Endothelial cell of umbilical vein (primary cell): ENCODE measurements at regions of chr4 and their contacts with region 1.

Region 1: GRCh38 chr4:138870737-138871554 is 144.6 kb upstream of the NOCT start:
- DNase-seq: peak; percentile 77
- H3K4me3 ChIP-seq: no peak overlapping the region
- H3K27ac ChIP-seq: no peak overlapping the region
- H3K4me1 ChIP-seq: peaks cover 5% of the 10 kb centered on the region
- H3K27me3 ChIP-seq: peaks cover 3 to 6% of the 10 kb centered on the region in 2 experiments
- CTCF ChIP-seq: peak; percentile 66 to 71
- POLR2A ChIP-seq: no peak

Region 2: GRCh38 chr4:137819964-137820383 is 1051.0 kb before region 1 on chr4:
- CTCF ChIA-PET with region 1: interaction called, 45 read pairs
- POLR2A ChIA-PET with region 1: no interaction called
- dilution Hi-C with region 1: no loop called
- intact Hi-C with region 1: loop called (anchors 1 kb)
- DNase-seq: peak; percentile 61
- H3K4me3 ChIP-seq: no peak overlapping the region
- H3K27ac ChIP-seq: no peak overlapping the region
- H3K4me1 ChIP-seq: peaks cover 3% of the 10 kb centered on the region
- H3K27me3 ChIP-seq: no peaks in the 10 kb centered on the region
- CTCF ChIP-seq: peak; percentile 46 to 57
- POLR2A ChIP-seq: no peak

Region 3: DNA sequence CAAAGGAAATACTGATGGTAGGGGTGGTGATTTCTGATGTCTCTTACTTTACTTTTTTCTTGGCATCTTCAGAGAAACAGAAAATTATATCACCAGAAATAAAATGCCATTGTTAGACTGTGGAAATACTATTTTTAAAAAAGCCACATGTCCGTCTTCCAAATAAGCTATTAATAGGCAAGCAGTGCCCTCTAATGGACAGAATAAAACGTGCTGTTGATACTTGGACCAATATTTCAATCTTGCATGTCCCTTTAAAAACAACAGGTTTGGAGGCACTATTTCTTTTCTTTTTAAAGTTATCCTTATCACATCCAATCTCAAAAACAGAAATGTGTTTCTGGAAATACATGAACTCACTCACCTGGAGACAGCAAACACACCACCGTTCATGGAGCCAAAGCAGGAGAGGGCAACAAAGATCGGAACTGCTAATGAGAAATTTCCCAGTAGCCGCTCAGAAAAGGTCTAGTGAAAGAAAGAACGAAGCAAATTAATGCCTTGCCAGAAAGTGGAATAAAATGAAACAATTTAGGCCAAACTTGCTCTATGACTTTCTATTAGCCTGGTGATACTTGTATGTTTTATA is 688.0 kb before region 1 on chr4:
- CTCF ChIA-PET with region 1: interaction called, 8 read pairs
- POLR2A ChIA-PET with region 1: no interaction called
- dilution Hi-C with region 1: no loop called
- intact Hi-C with region 1: loop called (anchors 2 kb)
- DNase-seq: peak; percentile 85
- H3K4me3 ChIP-seq: no peak overlapping the region
- H3K27ac ChIP-seq: no peak overlapping the region
- H3K4me1 ChIP-seq: peaks cover 14% of the 10 kb centered on the region
- H3K27me3 ChIP-seq: no peaks in the 10 kb centered on the region
- CTCF ChIP-seq: peak; percentile 43 to 48
- POLR2A ChIP-seq: no peak

Region 4: DNA sequence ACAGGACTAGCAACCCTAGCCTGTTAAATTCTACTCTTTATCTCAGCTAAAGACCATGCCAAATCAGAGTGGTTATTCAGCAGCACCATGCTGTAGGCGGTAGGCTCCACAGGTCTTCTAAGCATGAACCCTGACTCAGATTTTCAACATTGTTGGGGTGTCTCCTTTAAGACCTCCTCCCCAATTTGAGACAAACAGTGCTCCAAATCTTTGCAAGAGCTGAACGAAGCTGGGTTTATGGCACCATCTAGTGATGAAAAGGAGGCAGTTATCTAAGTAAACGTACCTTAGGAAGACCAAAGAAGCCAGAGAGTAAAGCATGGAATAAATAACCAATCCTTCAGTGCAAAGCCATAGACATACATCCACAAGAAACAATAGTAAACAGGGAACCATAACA is 294.3 kb before region 1 on chr4:
- CTCF ChIA-PET with region 1: interaction called, 84 read pairs
- POLR2A ChIA-PET with region 1: no interaction called
- dilution Hi-C with region 1: no loop called
- intact Hi-C with region 1: loop called (anchors 1 kb)
- DNase-seq: peak; percentile 57
- H3K4me3 ChIP-seq: no peak overlapping the region
- H3K27ac ChIP-seq: no peak overlapping the region
- H3K4me1 ChIP-seq: no peaks in the 10 kb centered on the region
- H3K27me3 ChIP-seq: peaks cover under 1 to 3% of the 10 kb centered on the region in 2 experiments
- CTCF ChIP-seq: peak; percentile 31 to 53
- POLR2A ChIP-seq: no peak

Region 5: GRCh38 chr4:138734746-138735145 is 136.2 kb before region 1 on chr4:
- CTCF ChIA-PET with region 1: interaction called, 3 read pairs
- POLR2A ChIA-PET with region 1: no interaction called
- dilution Hi-C with region 1: no loop called
- intact Hi-C with region 1: loop called (anchors 5 kb)
- DNase-seq: peak; percentile 90
- H3K4me3 ChIP-seq: no peak overlapping the region
- H3K27ac ChIP-seq: peak overlapping the region; percentile 34
- H3K4me1 ChIP-seq: peaks cover 30% of the 10 kb centered on the region
- H3K27me3 ChIP-seq: no peaks in the 10 kb centered on the region
- CTCF ChIP-seq: no peak
- POLR2A ChIP-seq: no peak

Region 6: DNA sequence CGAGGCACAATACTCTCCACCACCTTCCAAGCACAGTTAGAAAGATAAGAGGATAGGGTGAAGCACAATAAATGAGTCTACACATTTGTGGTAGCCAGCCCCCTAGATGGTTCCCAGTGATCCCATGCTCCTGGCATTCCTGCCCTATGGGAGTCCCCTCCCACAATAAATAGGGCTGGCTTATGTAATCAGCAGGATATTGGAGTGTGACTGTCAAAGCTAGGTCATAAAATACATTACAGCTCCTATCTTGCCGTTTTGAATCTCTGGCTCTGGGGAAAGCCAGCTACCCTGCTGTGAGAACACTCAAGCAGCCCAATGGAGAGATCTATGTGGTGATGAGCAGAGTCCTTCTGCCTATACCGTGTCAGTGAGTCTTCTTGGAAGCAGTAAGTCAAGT is 54.1 kb before region 1 on chr4:
- CTCF ChIA-PET with region 1: no interaction called
- POLR2A ChIA-PET with region 1: no interaction called
- dilution Hi-C with region 1: no loop called
- intact Hi-C with region 1: no loop called
- DNase-seq: no peak
- H3K4me3 ChIP-seq: no peak overlapping the region
- H3K27ac ChIP-seq: no peak overlapping the region
- H3K4me1 ChIP-seq: no peaks in the 10 kb centered on the region
- H3K27me3 ChIP-seq: no peaks in the 10 kb centered on the region
- CTCF ChIP-seq: no peak
- POLR2A ChIP-seq: no peak

Region 7: DNA sequence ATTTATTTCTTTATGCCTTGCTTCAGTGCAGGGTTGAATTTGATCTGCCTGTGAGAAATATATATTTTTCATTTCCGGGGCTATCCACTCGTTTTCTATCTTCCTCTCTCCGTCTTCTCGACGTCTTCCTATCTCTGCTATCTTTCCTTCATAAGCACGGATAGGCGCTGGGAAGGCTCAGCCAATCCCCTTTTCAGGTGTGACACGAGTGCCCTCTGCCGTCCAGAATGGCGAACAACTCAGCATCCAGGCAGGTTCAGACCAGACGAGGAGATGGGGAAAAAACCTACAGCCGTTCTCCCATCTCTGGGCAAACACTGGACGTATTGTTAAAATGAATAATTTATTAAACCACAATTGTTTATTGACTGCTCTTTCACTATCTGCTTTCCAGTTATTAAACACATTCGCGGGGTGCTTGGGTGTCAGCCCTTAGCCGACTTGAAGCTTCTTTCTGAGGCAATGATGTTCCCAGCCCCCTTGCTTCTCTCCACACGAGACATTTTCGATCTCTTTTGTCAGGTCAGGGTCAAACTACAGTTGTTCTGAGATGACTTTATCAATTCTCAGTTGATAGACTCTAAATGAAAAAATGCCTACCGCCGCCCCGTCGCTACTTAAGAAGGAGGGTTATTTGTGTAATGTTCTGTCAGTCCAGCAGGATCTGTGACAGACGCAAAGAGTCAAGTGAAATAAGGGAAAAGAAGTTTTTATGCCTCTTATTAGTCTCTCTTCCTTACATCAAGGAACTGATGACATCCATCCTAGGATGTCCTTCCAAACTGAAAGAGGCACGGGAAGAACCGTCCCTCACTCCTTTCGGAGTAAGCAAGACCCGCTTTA is 48.4 kb after region 1 on chr4:
- CTCF ChIA-PET with region 1: interaction called, 26 read pairs
- POLR2A ChIA-PET with region 1: no interaction called
- dilution Hi-C with region 1: no loop called
- intact Hi-C with region 1: loop called (anchors 1 kb)
- DNase-seq: peak; percentile 74
- H3K4me3 ChIP-seq: no peak overlapping the region
- H3K27ac ChIP-seq: no peak overlapping the region
- H3K4me1 ChIP-seq: no peaks in the 10 kb centered on the region
- H3K27me3 ChIP-seq: no peaks in the 10 kb centered on the region
- CTCF ChIP-seq: peak; percentile 72 to 75
- POLR2A ChIP-seq: no peak